Breast epithelium (tissue), 4 donors: ENCODE measurements at regions of chr6 and their contacts with region 1.

Region 1: GRCh38 chr6:62775427-62776022 is 435.7 kb upstream of the FKBP1C start:
- DNase-seq: no peak
- H3K4me3 ChIP-seq: no peak overlapping the region
- H3K27ac ChIP-seq: no peak overlapping the region
- H3K4me1 ChIP-seq: no peaks in the 10 kb centered on the region
- H3K27me3 ChIP-seq: no peaks in the 10 kb centered on the region
- CTCF ChIP-seq: peak in 1 of 3 donors; percentile 25
- POLR2A ChIP-seq: no peak

Region 2: DNA sequence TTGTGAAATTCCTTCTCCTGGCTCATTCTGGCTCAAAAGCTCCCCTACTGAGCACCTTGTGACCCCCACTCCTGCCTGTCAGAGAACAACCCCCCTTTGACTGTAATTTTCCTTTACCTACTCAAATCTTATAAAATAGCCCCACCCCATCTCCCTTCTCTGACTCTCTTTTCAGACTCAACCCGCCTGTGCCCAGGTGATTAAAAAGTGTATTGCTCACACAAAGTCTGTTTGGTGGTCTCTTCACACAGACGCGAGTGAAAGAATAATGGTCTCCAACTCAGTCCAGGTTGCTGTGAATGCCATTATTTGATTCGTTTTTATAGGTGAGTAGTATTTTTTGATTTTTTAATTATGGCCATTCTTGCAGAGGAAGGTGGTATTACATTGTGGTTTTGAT is 21.7 kb after region 1 on chr6:
- intact Hi-C with region 1: no loop called
- DNase-seq: no peak
- H3K4me3 ChIP-seq: no peak overlapping the region
- H3K27ac ChIP-seq: no peak overlapping the region
- H3K4me1 ChIP-seq: no peaks in the 10 kb centered on the region
- H3K27me3 ChIP-seq: no peaks in the 10 kb centered on the region
- CTCF ChIP-seq: no peak
- POLR2A ChIP-seq: no peak

Region 3: GRCh38 chr6:63140692-63141318 is 365.3 kb after region 1 on chr6:
- intact Hi-C with region 1: loop called (anchors 10 kb)
- DNase-seq: no peak
- H3K4me3 ChIP-seq: no peak overlapping the region
- H3K27ac ChIP-seq: no peak overlapping the region
- H3K4me1 ChIP-seq: no peaks in the 10 kb centered on the region
- H3K27me3 ChIP-seq: no peaks in the 10 kb centered on the region
- CTCF ChIP-seq: no peak
- POLR2A ChIP-seq: no peak